ENCODE measurements at regions of chr1 and their contacts with region 1.

Region 1: DNA sequence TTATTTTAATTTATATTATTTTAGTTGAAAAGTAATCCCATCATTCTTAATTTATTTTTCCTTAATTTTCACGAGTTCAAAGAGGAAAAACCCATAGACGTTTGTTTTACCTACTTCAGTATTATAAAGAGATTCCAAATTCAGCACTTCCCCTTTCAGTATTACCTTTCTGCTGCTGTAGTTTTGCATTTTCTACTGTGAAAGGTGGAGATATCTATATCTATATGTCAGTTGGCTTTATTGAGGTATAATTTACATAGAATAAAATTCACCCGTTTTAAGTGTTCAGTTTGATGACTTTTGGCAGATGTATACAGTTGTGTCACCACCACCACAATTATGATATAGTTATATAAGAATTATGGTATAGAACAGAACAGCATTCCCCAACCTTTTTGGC is 33.0 kb downstream of the MAST2 start:
- DNase-seq: no peak
- ATAC-seq: no peak
- H3K4me3 ChIP-seq: no peak overlapping the region
- H3K27ac ChIP-seq: no peak overlapping the region
- H3K4me1 ChIP-seq: no peaks in the 10 kb centered on the region
- H3K27me3 ChIP-seq: no peaks in the 10 kb centered on the region
- CTCF ChIP-seq: no peak

Region 2: DNA sequence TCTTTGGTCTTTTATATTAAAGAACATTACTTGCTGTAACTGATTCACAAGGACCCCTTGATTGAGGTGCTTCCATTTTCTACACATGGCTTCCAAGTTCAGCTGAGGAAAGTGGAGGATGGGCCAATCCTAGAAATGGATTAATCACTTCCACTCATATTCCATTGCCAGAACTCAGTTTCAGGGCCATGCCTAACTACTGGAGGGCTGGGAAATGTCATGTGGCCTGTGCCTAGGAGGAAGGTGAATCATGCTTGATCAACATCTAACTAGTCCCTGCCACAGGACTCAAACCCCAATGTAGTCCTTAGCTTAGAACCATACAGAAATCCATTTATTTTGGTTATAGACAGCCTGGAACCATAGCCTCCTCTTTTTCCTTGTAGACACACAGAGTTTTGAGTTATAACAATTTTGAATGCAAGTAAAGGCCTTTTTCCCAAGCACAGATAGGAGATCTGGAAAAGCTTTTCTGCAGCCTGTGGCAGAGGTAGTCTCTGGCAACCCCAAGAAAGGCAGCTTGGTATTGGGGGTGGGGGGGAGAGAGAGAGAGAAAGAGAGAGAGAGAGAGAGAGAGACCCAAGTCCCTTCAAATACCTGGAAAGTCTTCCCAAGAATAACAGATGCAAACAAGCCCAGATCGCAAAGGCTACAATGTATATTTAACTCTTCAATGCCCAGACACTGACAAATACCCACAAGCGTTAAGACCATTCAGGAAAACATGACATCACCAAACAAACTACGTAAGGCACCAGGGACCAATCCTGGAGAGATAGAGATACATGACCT is 20.6 kb before region 1 on chr1:
- CTCF ChIA-PET with region 1: no interaction called
- POLR2A ChIA-PET with region 1: interaction called, 12 read pairs
- in situ Hi-C with region 1: no loop called
- intact Hi-C with region 1: no loop called
- DNase-seq: no peak
- ATAC-seq: no peak
- H3K4me3 ChIP-seq: no peak overlapping the region
- H3K27ac ChIP-seq: no peak overlapping the region
- H3K4me1 ChIP-seq: no peaks in the 10 kb centered on the region
- H3K27me3 ChIP-seq: no peaks in the 10 kb centered on the region
- CTCF ChIP-seq: no peak

Measured in Panc1 (cell line).